Psoas muscle (tissue), 8 donors: ENCODE measurements at regions of chr9 and their contacts with region 1.

Region 1: DNA sequence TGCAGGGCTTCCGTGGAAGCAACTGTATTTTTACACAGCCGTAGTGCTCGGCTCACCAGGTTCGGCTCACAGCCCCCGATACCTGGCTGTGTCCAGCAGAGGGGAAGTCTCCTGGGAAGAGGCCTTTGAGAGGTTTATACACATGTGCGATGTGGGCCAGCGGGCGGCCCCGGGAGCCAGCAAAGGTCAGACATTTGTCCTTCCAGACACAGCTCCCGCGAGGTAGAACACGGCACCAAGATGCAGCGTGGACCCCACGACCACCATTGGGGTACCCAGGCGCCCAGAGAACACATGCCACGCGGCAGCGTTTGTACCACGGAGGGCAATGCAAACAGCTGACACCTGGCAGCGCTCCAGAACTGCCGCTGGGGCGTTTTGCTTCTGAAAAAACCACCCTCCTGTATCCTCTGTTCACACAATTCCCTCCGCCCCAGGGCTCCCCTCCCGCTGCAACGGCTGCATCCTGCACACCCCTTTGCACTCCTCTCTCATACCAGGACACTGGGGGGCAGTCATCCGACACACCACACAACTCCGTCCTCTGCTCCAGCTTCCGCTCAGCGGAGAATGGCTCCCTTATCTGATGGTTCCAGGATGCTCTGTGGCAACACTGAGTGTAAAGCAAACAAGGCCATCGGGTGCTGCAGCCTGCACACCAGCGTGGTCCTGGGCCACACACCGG is 235.3 kb downstream of the SYK start:
- DNase-seq: peak; percentile 79 to 88
- ATAC-seq: peak; percentile 93 to 99 (median 96)
- H3K4me3 ChIP-seq: no peak overlapping the region
- H3K27ac ChIP-seq: no peak overlapping the region
- H3K4me1 ChIP-seq: peaks cover 4% of the 10 kb centered on the region
- H3K27me3 ChIP-seq: no peaks in the 10 kb centered on the region
- CTCF ChIP-seq: peak; percentile 67

Region 2: DNA sequence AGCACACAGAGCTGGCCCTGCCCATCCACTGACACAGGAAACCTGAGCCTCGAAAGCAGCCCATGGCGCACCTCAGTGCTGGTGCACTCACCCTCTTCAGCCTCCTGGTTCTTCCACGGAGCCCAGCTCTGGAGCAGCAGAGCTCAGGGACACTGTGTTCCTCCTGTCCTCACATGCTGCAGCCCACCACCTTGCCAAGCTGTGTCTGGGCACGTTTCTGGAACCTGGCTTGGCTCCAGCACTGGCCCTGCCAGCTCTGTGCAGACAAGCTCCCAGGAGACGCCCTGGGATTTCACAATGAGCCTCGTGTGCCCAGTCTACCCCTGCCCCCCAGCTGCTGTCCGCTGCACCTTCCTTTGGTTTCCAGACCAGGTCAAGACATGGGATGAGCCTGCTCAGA is 115.9 kb before region 1 on chr9:
- intact Hi-C with region 1: loop called in 1 of 2 experiments (anchors 10 kb)
- DNase-seq: peak; percentile 81 to 98
- ATAC-seq: peak; percentile 90 to 96 (median 92)
- H3K4me3 ChIP-seq: no peak overlapping the region
- H3K27ac ChIP-seq: peak overlapping the region; percentile 76
- H3K4me1 ChIP-seq: peaks cover 18% of the 10 kb centered on the region
- H3K27me3 ChIP-seq: no peaks in the 10 kb centered on the region
- CTCF ChIP-seq: no peak

Region 3: DNA sequence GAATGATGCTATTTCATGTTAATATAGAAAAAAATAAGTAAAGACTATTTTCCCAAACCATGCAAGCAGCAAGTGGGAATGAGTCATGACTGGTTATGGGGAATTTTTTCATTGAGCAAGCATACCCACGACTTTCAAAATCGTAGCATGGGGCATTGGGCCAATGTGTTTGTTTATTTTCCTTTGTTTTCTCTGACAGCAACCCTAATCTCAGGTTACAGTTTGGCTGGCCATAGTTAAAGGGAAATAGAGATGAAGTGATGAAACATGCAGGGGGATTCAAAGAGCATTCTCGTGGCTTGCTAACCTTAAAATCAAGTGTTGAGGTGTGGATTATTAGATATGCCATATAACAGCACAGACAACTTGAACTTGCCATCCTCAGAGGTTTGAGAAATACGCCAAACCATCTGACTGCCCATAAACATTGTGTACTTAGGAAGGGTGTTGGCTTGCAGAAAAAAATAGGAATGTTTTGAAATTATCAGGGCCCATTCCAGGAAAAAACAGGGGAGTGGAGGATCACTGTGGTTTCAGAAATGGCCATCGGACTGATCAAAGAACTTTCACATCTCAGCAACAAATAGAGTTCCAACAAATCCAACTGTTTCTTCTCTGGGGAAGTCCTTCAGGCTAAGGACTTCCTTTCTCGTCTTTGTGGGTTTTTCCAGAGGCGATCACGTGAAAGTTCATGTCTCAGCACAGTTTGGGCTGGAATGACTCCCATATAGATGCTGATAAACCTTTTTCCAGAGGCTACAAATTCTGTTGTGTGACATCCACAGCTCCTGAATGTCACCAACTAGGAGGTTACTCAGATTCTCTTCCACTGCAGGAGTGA is 23.8 kb after region 1 on chr9:
- intact Hi-C with region 1: no loop called
- DNase-seq: peak in 1 of 2 donors; percentile 42
- ATAC-seq: peak; percentile 38 to 78 (median 60)
- H3K4me3 ChIP-seq: no peak overlapping the region
- H3K27ac ChIP-seq: peak overlapping the region; percentile 43
- H3K4me1 ChIP-seq: peaks cover 32% of the 10 kb centered on the region
- H3K27me3 ChIP-seq: no peaks in the 10 kb centered on the region
- CTCF ChIP-seq: no peak

Region 4: DNA sequence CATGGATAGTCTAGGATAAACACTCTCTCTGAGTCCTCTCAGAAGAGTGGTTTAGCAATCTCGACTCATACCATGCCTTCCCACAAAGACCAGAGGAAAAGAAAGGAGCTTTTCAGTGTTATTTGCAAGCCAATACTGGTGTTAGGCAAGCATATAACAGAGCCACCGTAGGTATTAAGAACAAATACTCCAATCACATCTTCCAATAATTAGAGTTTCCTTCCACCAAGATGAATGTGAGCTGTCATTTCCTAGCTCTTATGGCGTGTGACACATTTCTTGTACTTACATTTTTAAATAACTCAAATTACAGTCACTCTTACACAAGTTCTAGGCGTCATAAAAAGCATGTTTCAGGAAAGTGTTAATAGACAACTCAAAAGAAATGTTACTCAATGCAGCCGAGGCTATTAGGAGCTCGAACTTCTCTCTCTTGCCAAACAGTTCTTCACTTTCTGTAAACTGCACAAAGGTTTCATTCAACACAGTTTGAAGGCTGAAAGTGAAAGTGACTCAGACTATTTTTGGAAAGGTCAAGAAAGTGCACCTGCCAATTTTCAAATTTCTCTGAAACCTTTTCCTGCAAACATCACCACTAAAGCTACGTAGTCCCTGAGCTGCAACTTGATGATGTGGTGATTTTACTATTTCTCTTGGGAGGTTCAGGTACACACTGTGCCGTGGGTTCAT is 170.9 kb after region 1 on chr9:
- intact Hi-C with region 1: no loop called
- DNase-seq: no peak
- ATAC-seq: peak; percentile 57 to 84 (median 78)
- H3K4me3 ChIP-seq: peak overlapping the region; percentile 13
- H3K27ac ChIP-seq: peak overlapping the region; percentile 67
- H3K4me1 ChIP-seq: peaks cover 14% of the 10 kb centered on the region
- H3K27me3 ChIP-seq: no peaks in the 10 kb centered on the region
- CTCF ChIP-seq: no peak

Region 5: DNA sequence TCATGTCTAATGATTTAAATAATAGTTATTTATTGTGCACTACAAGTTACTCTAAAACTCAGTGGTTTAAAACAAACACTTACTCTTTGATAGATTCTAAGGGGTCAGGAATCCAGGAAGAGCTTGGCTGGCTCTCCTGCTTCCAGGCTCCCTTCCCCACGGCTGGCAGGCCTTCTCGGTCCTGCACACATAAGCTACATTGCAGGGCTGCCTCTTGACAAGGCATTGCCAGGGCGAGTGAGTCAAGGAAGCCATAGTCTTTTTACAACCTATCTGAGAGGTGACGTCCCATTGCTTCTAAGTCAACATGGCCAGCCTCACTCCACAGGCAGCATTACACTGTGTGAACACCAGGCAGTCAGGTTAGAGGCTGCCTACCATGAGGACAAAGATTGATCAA is 204.9 kb after region 1 on chr9:
- intact Hi-C with region 1: no loop called
- DNase-seq: no peak
- ATAC-seq: peak in 3 of 4 donors; percentile 60 to 78 (median 67)
- H3K4me3 ChIP-seq: no peak overlapping the region
- H3K27ac ChIP-seq: no peak overlapping the region
- H3K4me1 ChIP-seq: peaks cover 22% of the 10 kb centered on the region
- H3K27me3 ChIP-seq: no peaks in the 10 kb centered on the region
- CTCF ChIP-seq: no peak

Region 6: GRCh38 chr9:91433180-91433579 is 396.2 kb after region 1 on chr9:
- intact Hi-C with region 1: loop called in 1 of 2 experiments (anchors 5 kb)
- DNase-seq: no peak
- ATAC-seq: peak; percentile 95 to 99 (median 98)
- H3K4me3 ChIP-seq: no peak overlapping the region
- H3K27ac ChIP-seq: peak overlapping the region; percentile 51
- H3K4me1 ChIP-seq: peaks cover 4% of the 10 kb centered on the region
- H3K27me3 ChIP-seq: no peaks in the 10 kb centered on the region
- CTCF ChIP-seq: peak; percentile 49

Region 7: GRCh38 chr9:91681461-91682305 is 644.7 kb after region 1 on chr9:
- intact Hi-C with region 1: loop called in 1 of 2 experiments (anchors 5 kb)
- DNase-seq: peak; percentile 76 to 82
- ATAC-seq: peak; percentile 76 to 99 (median 98)
- H3K4me3 ChIP-seq: peak overlapping the region; percentile 38
- H3K27ac ChIP-seq: no peak overlapping the region
- H3K4me1 ChIP-seq: no peaks in the 10 kb centered on the region
- H3K27me3 ChIP-seq: no peaks in the 10 kb centered on the region
- CTCF ChIP-seq: peak; percentile 77